ENCODE measurements at regions of chr11 and their contacts with region 1.

Region 1: GRCh38 chr11:74388678-74389327 is 9.4 kb downstream of the PGM2L1 start:
- DNase-seq: peak; percentile 21 to 45
- ATAC-seq: peak; percentile 82 to 87; a peak in 5 of 6 replicates
- H3K4me3 ChIP-seq: no peak overlapping the region
- H3K27ac ChIP-seq: peak overlapping the region; percentile 21 to 67; a peak in 3 of 6 replicates
- H3K4me1 ChIP-seq: peaks cover 49% of the 10 kb centered on the region
- CTCF ChIP-seq: peak; percentile 93
- EP300 ChIP-seq: no peak
- POLR2A ChIP-seq: no peak
- RAD21 ChIP-seq: peak; percentile 70 to 73

Region 2: GRCh38 chr11:74434528-74434927 is 45.7 kb after region 1 on chr11:
- CTCF ChIA-PET with region 1: interaction called, 14 read pairs
- POLR2A ChIA-PET with region 1: no interaction called
- DNase-seq: no peak
- ATAC-seq: no peak
- H3K4me3 ChIP-seq: no peak overlapping the region
- H3K27ac ChIP-seq: 0 out of 6 replicates have a peak overlapping the region, but pooled peaks of 1 of the 2 experiments have one; percentile 27
- H3K4me1 ChIP-seq: peaks cover 18% of the 10 kb centered on the region
- CTCF ChIP-seq: no peak
- EP300 ChIP-seq: no peak
- POLR2A ChIP-seq: no peak
- RAD21 ChIP-seq: no peak

Region 3: DNA sequence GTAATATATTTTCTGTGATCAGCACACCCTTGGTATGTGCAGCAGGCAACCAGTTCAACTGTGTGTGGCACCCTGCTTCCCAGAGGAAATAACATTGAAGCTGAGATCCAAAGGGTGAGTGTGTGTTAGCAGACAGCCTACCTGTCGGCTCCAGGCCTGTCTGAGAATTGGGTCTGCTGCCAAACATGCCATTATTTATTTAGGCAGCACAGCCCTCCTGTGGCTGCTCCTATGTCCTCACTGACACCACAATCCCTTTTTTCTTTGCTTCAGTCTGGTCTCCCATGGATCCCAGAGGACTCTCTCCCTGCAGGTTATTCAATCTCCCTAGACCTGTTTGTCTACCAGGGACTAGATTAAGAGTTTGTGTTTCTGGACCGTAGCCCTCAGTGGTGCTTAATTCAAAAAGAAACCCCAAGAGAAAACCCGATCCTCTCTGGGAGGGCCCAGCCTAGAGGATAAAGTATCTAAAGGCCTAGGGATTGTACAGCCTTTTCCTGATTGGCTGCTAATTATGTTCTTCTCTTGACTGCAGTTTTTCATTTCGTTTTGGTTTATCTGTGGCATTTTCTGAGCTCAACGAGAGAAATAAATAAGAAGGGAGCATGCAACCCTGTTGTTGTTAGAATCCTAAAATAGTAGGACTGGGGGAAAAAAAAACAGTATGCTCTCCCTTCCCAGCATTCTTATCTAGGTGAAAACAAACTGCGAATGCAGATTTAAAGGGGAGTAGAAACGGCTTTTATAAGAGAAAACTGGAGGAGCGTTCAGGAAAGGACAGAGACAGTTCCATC is 54.5 kb after region 1 on chr11:
- CTCF ChIA-PET with region 1: interaction called, 30 read pairs
- POLR2A ChIA-PET with region 1: no interaction called
- DNase-seq: peak; percentile 44 to 74
- ATAC-seq: peak; percentile 89 to 95
- H3K4me3 ChIP-seq: no peak overlapping the region
- H3K27ac ChIP-seq: peak overlapping the region; percentile 62 to 71
- H3K4me1 ChIP-seq: peaks cover 20% of the 10 kb centered on the region
- CTCF ChIP-seq: peak; percentile 69
- EP300 ChIP-seq: no peak
- POLR2A ChIP-seq: no peak
- RAD21 ChIP-seq: peak; percentile 84 to 88